ENCODE measurements at regions of chr12 and their contacts with region 1.

Region 1: GRCh38 chr12:122190842-122191668 is 8.1 kb downstream of the LRRC43 start:
- DNase-seq: peak; percentile 43
- H3K4me3 ChIP-seq: no peak overlapping the region
- H3K27ac ChIP-seq: no peak overlapping the region
- H3K4me1 ChIP-seq: no peaks in the 10 kb centered on the region
- H3K27me3 ChIP-seq: no peaks in the 10 kb centered on the region
- CTCF ChIP-seq: peak; percentile 88 to 92

Region 2: DNA sequence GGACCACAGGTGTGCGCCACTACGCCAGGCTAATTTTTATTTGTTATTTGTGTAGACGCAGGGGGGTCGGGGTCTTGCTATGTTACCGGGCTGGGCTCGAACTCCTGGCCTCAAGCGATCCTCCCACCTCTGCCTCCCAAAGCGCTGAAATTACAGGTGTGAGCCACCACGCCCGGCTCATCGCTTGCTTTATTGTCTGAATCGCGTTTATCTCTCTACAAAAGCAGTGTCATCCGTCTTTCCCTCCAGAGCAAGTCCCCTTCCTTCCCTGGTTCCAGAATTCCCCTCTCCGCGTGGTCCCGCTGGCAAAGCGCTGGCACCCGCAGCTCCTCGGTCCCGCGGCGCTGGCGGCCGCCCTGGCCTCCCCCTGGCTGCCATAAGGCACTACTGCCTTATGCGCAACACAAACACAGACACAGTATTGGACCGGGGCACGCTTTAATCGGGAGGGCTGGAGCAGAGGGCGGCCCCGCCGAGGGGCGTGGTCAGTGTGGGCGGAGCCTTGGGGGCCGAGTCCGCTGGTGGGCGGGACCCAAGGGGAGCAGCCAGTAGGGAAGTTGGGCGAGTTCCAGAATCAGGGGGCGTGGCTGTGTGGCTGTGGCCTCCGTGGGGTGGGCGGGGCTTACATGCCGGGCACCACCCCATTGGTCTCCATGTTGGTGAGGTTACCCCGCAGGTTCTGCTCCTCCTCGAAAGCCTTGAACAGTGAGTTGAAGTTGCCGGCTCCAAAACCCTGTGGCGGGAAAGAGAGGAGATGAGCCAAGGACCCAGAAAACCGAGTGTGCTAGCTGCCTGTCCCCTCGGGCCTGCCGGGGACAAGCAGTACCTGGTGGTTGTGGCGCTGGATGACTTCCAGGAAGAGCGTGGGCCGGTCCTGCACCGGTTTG is 351.7 kb before region 1 on chr12:
- CTCF ChIA-PET with region 1: no interaction called
- dilution Hi-C with region 1: no loop called
- in situ Hi-C with region 1: no loop called
- intact Hi-C with region 1: no loop called
- DNase-seq: peak; percentile 96
- H3K4me3 ChIP-seq: peak overlapping the region; percentile 43 to 74 (median 70)
- H3K27ac ChIP-seq: peak overlapping the region; percentile 39
- H3K4me1 ChIP-seq: no peaks in the 10 kb centered on the region
- H3K27me3 ChIP-seq: no peaks in the 10 kb centered on the region
- CTCF ChIP-seq: peak in 1 of 2 donors; percentile 32

Region 3: GRCh38 chr12:122040579-122041386 is 150.3 kb before region 1 on chr12:
- CTCF ChIA-PET with region 1: no interaction called
- dilution Hi-C with region 1: no loop called
- in situ Hi-C with region 1: loop called in 1 of 2 experiments (anchors 10 kb)
- intact Hi-C with region 1: no loop called
- DNase-seq: no peak
- H3K4me3 ChIP-seq: no peak overlapping the region
- H3K27ac ChIP-seq: no peak overlapping the region
- H3K4me1 ChIP-seq: peaks cover 2% of the 10 kb centered on the region
- H3K27me3 ChIP-seq: no peaks in the 10 kb centered on the region
- CTCF ChIP-seq: no peak

Region 4: GRCh38 chr12:122064025-122064777 is 126.9 kb before region 1 on chr12:
- CTCF ChIA-PET with region 1: no interaction called
- dilution Hi-C with region 1: no loop called
- in situ Hi-C with region 1: no loop called
- intact Hi-C with region 1: loop called (anchors 1 kb)
- DNase-seq: peak; percentile 37
- H3K4me3 ChIP-seq: no peak overlapping the region
- H3K27ac ChIP-seq: no peak overlapping the region
- H3K4me1 ChIP-seq: peaks cover 16% of the 10 kb centered on the region
- H3K27me3 ChIP-seq: no peaks in the 10 kb centered on the region
- CTCF ChIP-seq: peak; percentile 10 to 21

Region 5: GRCh38 chr12:122078141-122079032 is 112.7 kb before region 1 on chr12 and contains the start of gene MLXIP:
- CTCF ChIA-PET with region 1: no interaction called
- dilution Hi-C with region 1: no loop called
- in situ Hi-C with region 1: no loop called
- intact Hi-C with region 1: no loop called
- DNase-seq: peak; percentile 89
- H3K4me3 ChIP-seq: peak within 1 kb of the TSS; percentile 61 to 83 (median 72)
- H3K27ac ChIP-seq: peak within 1 kb of the TSS; percentile 74
- H3K4me1 ChIP-seq: peaks cover 27% of the 10 kb centered on the region
- H3K27me3 ChIP-seq: no peaks in the 10 kb centered on the region
- CTCF ChIP-seq: no peak
- total RNA-seq, gene MLXIP: 17.7 to 53.6 TPM

Region 6: DNA sequence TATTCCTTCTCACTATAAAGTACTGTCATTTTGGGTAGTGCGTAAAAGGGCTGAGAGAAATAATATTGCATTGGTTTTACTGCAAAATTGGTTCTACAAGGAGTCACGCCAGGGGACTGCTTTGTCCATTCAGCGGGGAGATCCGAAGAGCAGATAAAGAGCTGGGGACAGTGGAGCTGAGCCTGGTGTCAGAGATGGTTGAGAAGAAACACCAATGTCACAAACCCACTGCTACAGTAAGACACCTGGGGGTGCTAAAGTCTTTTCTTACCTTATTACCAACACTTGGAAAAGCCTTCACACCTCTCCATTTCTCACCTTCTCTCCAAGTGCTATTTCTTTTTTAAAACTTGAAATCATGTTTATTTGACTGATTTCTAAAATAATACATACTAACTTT is 31.2 kb before region 1 on chr12:
- CTCF ChIA-PET with region 1: no interaction called
- dilution Hi-C with region 1: no loop called
- in situ Hi-C with region 1: no loop called
- intact Hi-C with region 1: loop called (anchors 1 kb)
- DNase-seq: no peak
- H3K4me3 ChIP-seq: no peak overlapping the region
- H3K27ac ChIP-seq: no peak overlapping the region
- H3K4me1 ChIP-seq: no peaks in the 10 kb centered on the region
- H3K27me3 ChIP-seq: no peaks in the 10 kb centered on the region
- CTCF ChIP-seq: peak; percentile 14 to 24

Measured in mammary epithelial cell (primary cell).